Sciatic nerve (tissue), 2 donors: ENCODE measurements at regions of chr18 and their contacts with region 1.

Region 1: DNA sequence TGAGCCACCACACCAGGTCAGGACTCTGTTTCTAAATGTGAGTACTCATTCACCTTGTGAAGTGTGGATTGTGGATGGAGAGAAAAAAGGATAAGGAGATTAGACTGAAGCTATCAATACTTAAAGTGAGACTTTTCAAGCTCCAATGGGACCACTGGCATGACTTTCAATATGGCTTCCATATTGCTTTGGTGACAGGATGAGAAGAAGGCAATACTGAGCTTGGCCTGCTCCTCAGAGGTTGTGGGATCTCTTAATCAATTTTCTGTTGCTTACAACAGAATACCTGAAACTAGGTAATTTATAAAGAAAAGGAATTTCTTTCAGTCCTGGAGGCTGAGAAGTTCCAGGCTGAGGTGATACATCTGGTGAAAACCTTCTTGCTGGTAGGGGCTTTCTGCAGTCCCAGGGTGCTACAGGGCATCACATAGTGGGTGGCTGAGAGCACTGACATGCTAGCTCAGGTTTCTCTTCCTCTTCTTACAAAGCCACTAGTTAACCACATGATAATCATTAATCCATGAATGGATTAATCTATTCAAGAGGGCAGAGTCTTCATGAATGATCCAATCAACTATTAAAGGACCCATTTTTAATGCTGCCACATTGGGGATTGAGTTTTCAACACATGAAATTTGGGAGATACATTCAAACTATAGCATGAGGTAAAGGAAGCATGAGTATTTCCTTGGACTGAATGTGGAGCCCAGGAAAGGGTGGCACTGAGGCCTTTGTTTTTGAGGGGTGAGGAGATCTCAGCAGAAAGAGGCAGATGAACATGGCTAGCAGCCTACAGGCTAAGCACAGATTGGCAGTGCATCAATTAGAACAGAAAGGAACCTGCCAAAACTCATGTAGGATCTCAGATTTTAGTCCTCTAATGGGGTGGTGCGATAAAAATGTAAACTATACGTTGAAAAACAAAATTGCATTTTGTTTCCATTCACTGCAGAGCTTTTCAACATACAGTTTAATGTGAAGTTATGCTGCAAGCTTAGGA is 274.5 kb downstream of the PIK3C3 start:
- DNase-seq: no peak
- ATAC-seq: no peak

Region 2: GRCh38 chr18:42174909-42175308 is 54.6 kb before region 1 on chr18:
- intact Hi-C with region 1: loop called (anchors 2 kb)
- DNase-seq: no peak
- ATAC-seq: no peak